Left cardiac atrium (tissue), 4 donors: ENCODE measurements at regions of chr18 and their contacts with region 1.

Region 1: DNA sequence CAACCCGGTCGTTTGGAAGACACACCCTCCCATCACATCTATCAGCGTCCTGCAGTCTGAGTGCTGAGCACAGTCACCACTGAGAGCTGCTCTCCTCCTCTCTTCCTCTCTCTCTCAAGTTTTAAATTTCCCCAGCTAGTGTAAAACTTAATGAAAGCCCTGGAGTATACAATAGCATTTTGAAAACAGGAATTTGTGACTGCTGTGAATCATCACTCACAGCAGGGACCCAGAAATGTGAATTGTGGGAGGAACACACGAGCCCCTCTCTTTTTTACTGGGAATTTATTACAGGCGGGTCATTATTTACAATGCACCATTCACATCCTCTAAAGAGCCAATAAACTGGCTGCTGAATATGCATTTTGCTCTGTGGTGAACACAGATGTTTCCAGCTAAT is 185.0 kb upstream of the SMIM21 start:
- DNase-seq: no peak
- ATAC-seq: no peak

Region 2: GRCh38 chr18:75679331-75679730 is 66.9 kb after region 1 on chr18:
- intact Hi-C with region 1: loop called in 1 of 2 experiments (anchors 10 kb)
- DNase-seq: peak; percentile 71
- ATAC-seq: peak; percentile 82 to 96